ENCODE measurements at regions of chr13 and their contacts with region 1.

Region 1: GRCh38 chr13:73417015-73417623 is 358.3 kb downstream of the KLF5 start:
- DNase-seq: peak; percentile 53
- H3K4me3 Mint-ChIP-seq: no peak overlapping the region
- H3K27ac Mint-ChIP-seq: no peak overlapping the region
- H3K4me1 Mint-ChIP-seq: peaks cover 25% of the 10 kb centered on the region
- H3K27me3 Mint-ChIP-seq: no peaks in the 10 kb centered on the region
- CTCF ChIP-seq: peak; percentile 25

Region 2: GRCh38 chr13:73081256-73081915 is 335.7 kb before region 1 on chr13:
- CTCF ChIA-PET with region 1: no interaction called
- POLR2A ChIA-PET with region 1: interaction called, 9 read pairs
- intact Hi-C with region 1: loop called (anchors 5 kb)
- DNase-seq: no peak
- H3K4me3 Mint-ChIP-seq: no peak overlapping the region
- H3K27ac Mint-ChIP-seq: peak overlapping the region; percentile 93
- H3K4me1 Mint-ChIP-seq: peaks cover 20% of the 10 kb centered on the region
- H3K27me3 Mint-ChIP-seq: no peaks in the 10 kb centered on the region
- CTCF ChIP-seq: no peak

Region 3: GRCh38 chr13:73325711-73326558 is 91.2 kb before region 1 on chr13:
- CTCF ChIA-PET with region 1: no interaction called
- POLR2A ChIA-PET with region 1: no interaction called
- intact Hi-C with region 1: no loop called
- DNase-seq: peak; percentile 6
- H3K4me3 Mint-ChIP-seq: no peak overlapping the region
- H3K27ac Mint-ChIP-seq: peak overlapping the region; percentile 59
- H3K4me1 Mint-ChIP-seq: peaks cover 18% of the 10 kb centered on the region
- H3K27me3 Mint-ChIP-seq: no peaks in the 10 kb centered on the region
- CTCF ChIP-seq: no peak

Region 4: DNA sequence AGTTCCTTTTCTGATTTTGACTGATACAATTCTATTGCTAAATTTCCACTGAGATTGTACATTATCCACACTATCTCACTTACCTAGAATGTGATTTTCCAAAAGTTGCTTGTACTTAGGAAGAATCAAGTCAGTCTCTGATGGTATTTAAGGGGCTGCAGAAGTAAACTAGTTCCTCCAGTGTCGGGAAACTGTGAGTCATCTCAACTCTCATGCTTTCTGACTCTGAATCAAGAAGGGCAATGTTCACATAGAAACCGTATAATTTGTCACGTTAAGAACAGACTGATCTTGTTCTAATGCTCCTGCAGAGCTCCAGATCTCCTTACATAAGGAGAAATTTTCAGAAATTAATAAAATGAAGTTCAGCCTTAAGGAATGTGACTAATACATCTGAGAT is 11.0 kb after region 1 on chr13:
- CTCF ChIA-PET with region 1: interaction called, 5 read pairs
- POLR2A ChIA-PET with region 1: interaction called, 18 read pairs
- intact Hi-C with region 1: no loop called
- DNase-seq: peak; percentile 81
- H3K4me3 Mint-ChIP-seq: peak overlapping the region; percentile 7
- H3K27ac Mint-ChIP-seq: peak overlapping the region; percentile 79
- H3K4me1 Mint-ChIP-seq: peaks cover 36% of the 10 kb centered on the region
- H3K27me3 Mint-ChIP-seq: no peaks in the 10 kb centered on the region
- CTCF ChIP-seq: no peak

Region 5: DNA sequence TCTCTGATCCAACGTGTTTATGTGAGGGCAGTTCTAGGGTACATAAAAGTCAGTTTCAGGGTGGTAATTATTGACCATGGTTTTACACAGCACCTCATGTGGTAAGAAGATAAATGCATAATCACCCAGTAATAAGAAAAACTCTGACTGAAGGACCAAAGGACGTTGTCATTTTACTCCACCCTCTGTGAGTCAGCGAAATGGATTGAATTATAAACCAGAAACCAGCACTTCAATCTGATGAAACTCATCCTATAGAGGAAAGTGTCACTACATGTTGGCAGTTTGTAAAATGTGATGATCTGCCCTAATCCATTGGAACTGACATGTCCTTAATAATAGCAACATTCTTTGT is 48.5 kb after region 1 on chr13:
- CTCF ChIA-PET with region 1: no interaction called
- POLR2A ChIA-PET with region 1: interaction called, 20 read pairs
- intact Hi-C with region 1: no loop called
- DNase-seq: peak; percentile 76
- H3K4me3 Mint-ChIP-seq: no peak overlapping the region
- H3K27ac Mint-ChIP-seq: peak overlapping the region; percentile 90
- H3K4me1 Mint-ChIP-seq: peaks cover 15% of the 10 kb centered on the region
- H3K27me3 Mint-ChIP-seq: no peaks in the 10 kb centered on the region
- CTCF ChIP-seq: no peak

Region 6: DNA sequence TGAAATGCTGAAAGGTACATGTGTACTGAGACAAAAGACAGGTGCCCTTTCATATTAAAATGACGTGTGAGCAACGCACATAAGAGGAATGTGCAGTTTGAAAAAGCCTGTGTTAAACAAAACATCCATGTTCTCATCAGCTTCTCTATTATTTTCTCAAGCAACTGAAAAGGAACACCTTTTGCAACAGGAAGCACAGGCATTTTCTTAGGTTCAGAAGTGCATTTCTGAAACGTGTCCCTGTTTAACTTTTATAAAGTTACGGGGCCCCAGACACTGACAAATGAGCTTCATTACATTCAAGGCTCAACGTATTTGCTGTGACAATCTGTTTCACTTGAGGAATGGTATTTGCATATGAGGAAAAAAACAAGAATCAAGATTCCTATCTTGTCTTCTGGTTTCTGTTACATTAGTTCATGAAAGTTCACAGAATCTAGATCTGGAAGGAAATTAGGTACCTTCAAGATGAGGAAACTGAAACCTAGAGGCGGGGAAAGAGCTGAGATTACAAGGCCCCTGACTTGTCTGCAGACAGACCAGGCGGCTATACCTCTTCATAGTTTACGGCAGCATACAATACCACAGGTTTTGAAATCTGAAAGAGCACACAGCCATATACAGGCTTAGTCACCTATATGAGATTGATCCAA is 285.4 kb after region 1 on chr13:
- CTCF ChIA-PET with region 1: no interaction called
- POLR2A ChIA-PET with region 1: interaction called, 24 read pairs
- intact Hi-C with region 1: loop called (anchors 5 kb)
- DNase-seq: peak; percentile 84
- H3K4me3 Mint-ChIP-seq: peak overlapping the region; percentile 63
- H3K27ac Mint-ChIP-seq: peak overlapping the region; percentile 94
- H3K4me1 Mint-ChIP-seq: peaks cover 33% of the 10 kb centered on the region
- H3K27me3 Mint-ChIP-seq: no peaks in the 10 kb centered on the region
- CTCF ChIP-seq: no peak

Measured in MCF 10A (cell line).